CD14-positive monocyte (primary cell): ENCODE measurements at regions of chr6 and their contacts with region 1.

Region 1: DNA sequence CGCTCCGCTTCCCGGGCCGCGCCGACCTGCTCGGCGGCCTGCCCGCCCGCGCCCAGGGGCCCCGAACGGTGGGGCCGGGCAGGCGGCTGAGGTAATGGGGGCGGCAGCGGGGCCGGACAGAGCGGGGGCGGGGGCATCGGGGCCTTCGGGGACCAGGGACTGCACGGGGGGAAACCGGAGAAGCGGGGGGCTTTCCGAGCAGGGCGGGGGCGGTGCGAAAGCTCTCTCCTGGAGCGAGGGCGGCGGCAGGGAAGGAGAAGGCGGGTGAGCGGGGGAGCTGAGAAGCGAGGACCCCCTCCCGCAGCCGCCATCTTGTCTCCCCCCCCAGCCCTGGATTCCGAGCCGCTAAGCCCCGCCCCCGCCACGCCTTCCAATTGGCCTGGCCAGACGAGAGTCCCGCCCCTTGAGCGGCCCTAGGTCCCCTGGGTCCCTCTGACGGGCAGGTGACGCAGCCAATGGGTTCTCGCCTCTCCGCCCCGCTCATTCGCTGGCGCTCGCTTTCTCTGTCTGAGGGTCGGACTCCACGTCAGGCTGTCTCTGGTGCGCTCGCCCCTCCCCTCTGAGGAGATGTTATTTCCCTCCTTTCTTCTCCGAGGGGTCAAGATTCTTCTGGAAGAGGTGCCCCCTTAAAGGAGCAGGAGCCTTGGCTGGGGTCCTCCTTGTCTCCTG is 470 bp downstream of the BRPF3 start:
- DNase-seq: peak; percentile 96 to 98 (median 97)
- H3K4me3 ChIP-seq: peak overlapping the region; percentile 63 to 93 (median 81)
- H3K4me3 Mint-ChIP-seq: peak overlapping the region; percentile 85 to 92
- H3K27ac ChIP-seq: peak overlapping the region; percentile 57 to 77
- H3K27ac Mint-ChIP-seq: peak overlapping the region; percentile 85 to 98 (median 96)
- H3K4me1 ChIP-seq: peaks cover 18 to 24% of the 10 kb centered on the region in 2 donors
- H3K4me1 Mint-ChIP-seq: peaks cover 23% of the 10 kb centered on the region
- H3K27me3 ChIP-seq: no peaks in the 10 kb centered on the region
- H3K27me3 Mint-ChIP-seq: peaks cover 0 to 8% (median 0%) of the 10 kb centered on the region in 3 donors
- CTCF ChIP-seq: no peak

Region 2: DNA sequence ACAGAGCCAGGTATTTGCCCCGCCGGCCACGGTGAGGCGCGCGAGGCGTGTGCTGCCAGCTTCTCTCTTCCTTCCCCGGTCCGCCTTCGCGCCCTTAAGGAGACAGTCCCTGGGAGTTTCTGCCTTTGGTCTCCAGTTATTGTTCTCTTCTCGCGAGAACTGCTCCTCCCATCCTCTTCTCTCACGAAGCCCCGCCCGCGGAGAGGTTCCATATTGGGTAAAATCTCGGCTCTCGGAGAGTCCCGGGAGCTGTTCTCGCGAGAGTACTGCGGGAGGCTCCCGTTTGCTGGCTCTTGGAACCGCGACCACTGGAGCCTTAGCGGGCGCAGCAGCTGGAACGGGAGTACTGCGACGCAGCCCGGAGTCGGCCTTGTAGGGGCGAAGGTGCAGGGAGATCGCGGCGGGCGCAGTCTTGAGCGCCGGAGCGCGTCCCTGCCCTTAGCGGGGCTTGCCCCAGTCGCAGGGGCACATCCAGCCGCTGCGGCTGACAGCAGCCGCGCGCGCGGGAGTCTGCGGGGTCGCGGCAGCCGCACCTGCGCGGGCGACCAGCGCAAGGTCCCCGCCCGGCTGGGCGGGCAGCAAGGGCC is 169.4 kb before region 1 on chr6 and contains the start of gene MAPK14:
- intact Hi-C with region 1: loop called (anchors 5 kb)
- DNase-seq: peak; percentile 99 to 100 (median 100)
- H3K4me3 ChIP-seq: peak within 1 kb of the TSS; percentile 87 to 99 (median 99)
- H3K4me3 Mint-ChIP-seq: peak within 1 kb of the TSS; percentile 92 to 98
- H3K27ac ChIP-seq: peak within 1 kb of the TSS; percentile 82 to 92
- H3K27ac Mint-ChIP-seq: peak within 1 kb of the TSS; percentile 90 to 98 (median 96)
- H3K4me1 ChIP-seq: peaks cover 50 to 57% of the 10 kb centered on the region in 2 donors
- H3K4me1 Mint-ChIP-seq: peaks cover 50% of the 10 kb centered on the region
- H3K27me3 ChIP-seq: no peaks in the 10 kb centered on the region
- H3K27me3 Mint-ChIP-seq: peaks cover 0 to 3% (median 2%) of the 10 kb centered on the region in 3 donors
- CTCF ChIP-seq: peak; percentile 86
- polyA plus RNA-seq, gene MAPK14: 56.6 to 96.6 (median 83.7) TPM

Region 3: DNA sequence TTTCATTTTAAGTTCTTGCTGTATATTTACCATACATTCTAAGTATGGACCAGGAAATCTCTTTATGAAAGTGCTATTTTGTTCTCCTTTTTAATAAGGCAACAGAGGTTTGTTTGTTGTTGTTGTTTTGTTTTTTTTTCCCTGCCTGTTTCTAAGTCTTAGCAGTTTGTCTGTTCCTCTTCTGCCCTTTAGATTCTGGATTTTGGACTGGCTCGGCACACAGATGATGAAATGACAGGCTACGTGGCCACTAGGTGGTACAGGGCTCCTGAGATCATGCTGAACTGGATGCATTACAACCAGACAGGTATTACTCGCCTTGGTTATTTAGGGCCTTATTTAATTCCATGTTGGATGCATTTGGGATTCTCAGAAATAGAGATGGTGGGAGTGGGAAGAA is 121.4 kb before region 1 on chr6:
- intact Hi-C with region 1: no loop called
- DNase-seq: peak in 2 of 3 donors; percentile 18 to 32
- H3K4me3 ChIP-seq: no peak overlapping the region
- H3K4me3 Mint-ChIP-seq: no peak overlapping the region
- H3K27ac ChIP-seq: peak overlapping the region in 1 of 2 donors; percentile 63
- H3K27ac Mint-ChIP-seq: peak overlapping the region; percentile 36 to 85 (median 57)
- H3K4me1 ChIP-seq: peaks cover 0 to 3% of the 10 kb centered on the region in 2 donors
- H3K4me1 Mint-ChIP-seq: peaks cover 19% of the 10 kb centered on the region
- H3K27me3 ChIP-seq: no peaks in the 10 kb centered on the region
- H3K27me3 Mint-ChIP-seq: peaks cover 0 to 1% (median 0%) of the 10 kb centered on the region in 3 donors
- CTCF ChIP-seq: peak; percentile 32

Region 4: GRCh38 chr6:36123257-36124139 is 73.5 kb before region 1 on chr6:
- intact Hi-C with region 1: loop called (anchors 2 to 5 kb)
- DNase-seq: peak; percentile 75 to 83 (median 82)
- H3K4me3 ChIP-seq: no peak overlapping the region
- H3K4me3 Mint-ChIP-seq: peak overlapping the region in 1 of 2 donors; percentile 27
- H3K27ac ChIP-seq: peak overlapping the region; percentile 1 to 69
- H3K27ac Mint-ChIP-seq: peak overlapping the region; percentile 73 to 99 (median 89)
- H3K4me1 ChIP-seq: peaks cover 79 to 82% of the 10 kb centered on the region in 2 donors
- H3K4me1 Mint-ChIP-seq: peaks cover 88% of the 10 kb centered on the region
- H3K27me3 ChIP-seq: no peaks in the 10 kb centered on the region
- H3K27me3 Mint-ChIP-seq: peaks cover 0 to 5% (median 0%) of the 10 kb centered on the region in 3 donors
- CTCF ChIP-seq: peak; percentile 65

Region 5: DNA sequence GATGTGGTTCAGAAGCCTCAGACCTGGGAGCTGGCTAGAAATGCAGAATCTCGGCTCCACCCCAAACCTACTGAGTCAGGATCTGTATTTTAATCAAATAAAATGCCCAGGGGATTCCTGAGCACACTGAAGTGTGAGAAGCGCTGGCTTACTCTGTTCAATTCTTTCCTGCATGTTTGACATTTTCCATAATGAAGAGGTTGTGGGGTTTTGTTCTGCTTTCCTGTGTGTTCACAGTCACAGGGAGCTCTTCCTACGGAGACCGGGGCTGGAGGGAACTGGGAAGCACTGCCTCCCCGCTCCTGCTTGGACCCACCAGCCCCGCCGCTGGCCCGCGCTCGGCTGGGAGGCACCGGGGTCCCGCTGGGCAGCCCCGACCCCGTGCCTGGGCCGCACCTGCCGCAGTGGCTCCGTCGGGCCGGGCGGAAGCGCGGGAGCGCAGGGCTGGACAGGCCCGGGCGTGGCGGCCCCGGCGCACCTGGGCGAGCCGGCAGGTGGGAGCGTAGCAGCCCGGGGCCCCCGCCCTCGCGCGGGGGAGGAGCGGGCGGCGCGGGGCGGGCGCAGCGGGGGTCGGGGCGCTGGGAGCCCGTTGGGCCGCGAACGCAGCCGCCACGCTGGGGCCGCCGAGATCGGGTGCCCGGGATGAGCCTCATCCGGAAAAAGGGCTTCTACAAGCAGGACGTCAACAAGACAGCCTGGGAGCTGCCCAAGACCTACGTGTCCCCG is 66.9 kb before region 1 on chr6 and contains the start of gene MAPK13:
- intact Hi-C with region 1: loop called in 1 of 2 experiments (anchors 2 kb)
- DNase-seq: peak in 2 of 3 donors; percentile 39 to 44
- H3K4me3 ChIP-seq: peak within 1 kb of the TSS; percentile 9 to 72 (median 30)
- H3K4me3 Mint-ChIP-seq: peak within 1 kb of the TSS; percentile 73 to 86
- H3K27ac ChIP-seq: peak within 1 kb of the TSS; percentile 4 to 27
- H3K27ac Mint-ChIP-seq: peak within 1 kb of the TSS in 6 of 7 donors; percentile 40 to 74 (median 66)
- H3K4me1 ChIP-seq: peaks cover 50 to 59% of the 10 kb centered on the region in 2 donors
- H3K4me1 Mint-ChIP-seq: peaks cover 64% of the 10 kb centered on the region
- H3K27me3 ChIP-seq: peaks cover 0 to 5% of the 10 kb centered on the region in 2 donors
- H3K27me3 Mint-ChIP-seq: peaks cover 14 to 19% (median 16%) of the 10 kb centered on the region in 3 donors
- CTCF ChIP-seq: no peak
- polyA plus RNA-seq, gene MAPK13: 0.88 to 9.8 (median 2.4) TPM

Region 6: GRCh38 chr6:36169023-36170007 is 27.7 kb before region 1 on chr6:
- intact Hi-C with region 1: no loop called
- DNase-seq: no peak
- H3K4me3 ChIP-seq: no peak overlapping the region
- H3K4me3 Mint-ChIP-seq: no peak overlapping the region
- H3K27ac ChIP-seq: no peak overlapping the region
- H3K27ac Mint-ChIP-seq: peak overlapping the region in 2 of 7 donors; percentile 12 to 45
- H3K4me1 ChIP-seq: peaks cover 17 to 19% of the 10 kb centered on the region in 2 donors
- H3K4me1 Mint-ChIP-seq: peaks cover 20% of the 10 kb centered on the region
- H3K27me3 ChIP-seq: no peaks in the 10 kb centered on the region
- H3K27me3 Mint-ChIP-seq: peaks cover 0 to 2% (median 1%) of the 10 kb centered on the region in 3 donors
- CTCF ChIP-seq: no peak

Region 7: GRCh38 chr6:36290661-36291620 is 93.9 kb after region 1 on chr6:
- intact Hi-C with region 1: loop called in 1 of 2 experiments (anchors 5 kb)
- DNase-seq: peak; percentile 98 to 100 (median 99)
- H3K4me3 ChIP-seq: peak overlapping the region in 1 of 3 experiments; percentile 67
- H3K4me3 Mint-ChIP-seq: peak overlapping the region; percentile 70 to 79
- H3K27ac ChIP-seq: peak overlapping the region; percentile 97 to 98
- H3K27ac Mint-ChIP-seq: peak overlapping the region; percentile 97 to 100 (median 99)
- H3K4me1 ChIP-seq: peaks cover 48 to 61% of the 10 kb centered on the region in 2 donors
- H3K4me1 Mint-ChIP-seq: peaks cover 65% of the 10 kb centered on the region
- H3K27me3 ChIP-seq: no peaks in the 10 kb centered on the region
- H3K27me3 Mint-ChIP-seq: peaks cover 0 to 3% (median 2%) of the 10 kb centered on the region in 3 donors
- CTCF ChIP-seq: no peak